ENCODE measurements at regions of chr5 and their contacts with region 1.

Region 1: DNA sequence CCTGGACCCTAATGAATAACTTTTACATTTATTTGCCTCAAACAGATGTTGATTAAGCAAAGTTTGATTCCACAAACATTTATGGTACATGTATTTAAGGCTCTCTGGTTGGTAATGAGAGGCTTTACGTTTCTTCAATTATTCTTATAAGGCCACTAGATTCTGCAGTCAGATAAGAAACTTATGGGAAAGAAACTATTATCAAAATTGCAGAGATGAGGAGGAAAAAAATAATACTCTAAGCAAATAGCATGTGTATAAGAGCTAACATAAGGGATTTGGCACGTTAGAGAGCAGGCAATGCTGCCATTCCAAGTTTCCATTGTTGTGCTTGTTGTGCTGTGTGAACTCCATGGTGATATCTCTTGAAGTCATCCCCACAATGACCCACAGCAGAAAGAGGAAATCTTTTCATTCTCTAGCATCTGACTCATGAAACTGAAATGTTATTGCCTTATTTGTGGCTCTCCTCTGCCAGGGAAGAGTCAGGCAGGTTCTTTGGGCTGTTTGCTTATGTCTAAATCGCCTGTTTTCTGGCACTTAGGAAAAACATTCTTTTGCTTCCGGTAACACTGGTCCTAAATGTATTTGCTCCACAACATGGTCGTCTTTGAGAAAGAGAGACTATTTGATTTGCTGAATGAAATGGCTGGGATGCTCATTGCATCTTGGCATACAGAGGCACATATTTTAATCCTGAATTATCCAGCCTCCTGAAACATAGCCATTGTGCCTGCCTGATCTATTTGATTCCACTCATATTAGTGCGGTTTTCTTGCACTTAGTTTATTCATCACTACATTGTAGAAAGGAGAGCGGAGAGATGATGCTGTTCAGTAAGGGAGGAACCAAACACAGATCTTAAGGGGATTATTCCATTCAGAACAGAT is 188.7 kb downstream of the CSNK1G3 start:
- DNase-seq: no peak
- ATAC-seq: peak; percentile 38

Region 2: DNA sequence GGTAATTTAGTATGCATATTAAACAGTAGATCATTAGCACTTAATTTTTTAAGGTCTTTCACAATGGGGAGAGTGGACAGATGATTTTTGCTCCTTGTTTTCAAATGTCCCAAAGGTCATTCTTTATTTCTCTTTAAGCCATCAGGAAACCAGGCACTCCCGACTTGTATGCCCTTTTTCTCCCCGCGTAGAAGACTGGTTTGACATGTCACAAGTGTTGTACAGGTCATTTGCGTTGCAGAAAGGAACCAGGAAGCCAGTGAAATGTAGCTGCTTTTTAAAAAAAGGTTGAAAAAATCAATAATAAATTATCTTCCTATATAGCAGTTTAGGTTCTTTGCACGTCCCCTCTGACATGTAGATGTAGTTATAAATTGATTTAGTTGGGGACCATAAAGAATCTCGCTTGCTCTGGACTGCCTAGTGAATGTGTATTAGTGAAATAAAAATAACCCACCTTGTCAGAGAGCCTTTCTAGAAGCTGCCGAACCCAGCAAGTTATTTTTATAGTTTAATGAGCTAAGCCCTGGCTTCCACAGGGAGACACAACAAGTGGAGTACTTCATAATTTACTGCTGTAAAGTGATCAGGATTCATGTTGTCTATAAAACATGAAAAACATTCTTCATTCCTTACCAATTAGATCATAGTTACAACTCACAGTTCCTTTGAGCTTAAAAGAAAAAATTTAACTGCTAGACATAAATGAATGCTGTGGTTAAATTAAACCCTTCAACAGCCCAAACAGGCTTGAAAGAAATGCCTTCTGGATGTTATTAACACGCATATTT is 215.9 kb after region 1 on chr5:
- intact Hi-C with region 1: loop called (anchors 5 kb)
- DNase-seq: no peak
- ATAC-seq: peak; percentile 59

Region 3: DNA sequence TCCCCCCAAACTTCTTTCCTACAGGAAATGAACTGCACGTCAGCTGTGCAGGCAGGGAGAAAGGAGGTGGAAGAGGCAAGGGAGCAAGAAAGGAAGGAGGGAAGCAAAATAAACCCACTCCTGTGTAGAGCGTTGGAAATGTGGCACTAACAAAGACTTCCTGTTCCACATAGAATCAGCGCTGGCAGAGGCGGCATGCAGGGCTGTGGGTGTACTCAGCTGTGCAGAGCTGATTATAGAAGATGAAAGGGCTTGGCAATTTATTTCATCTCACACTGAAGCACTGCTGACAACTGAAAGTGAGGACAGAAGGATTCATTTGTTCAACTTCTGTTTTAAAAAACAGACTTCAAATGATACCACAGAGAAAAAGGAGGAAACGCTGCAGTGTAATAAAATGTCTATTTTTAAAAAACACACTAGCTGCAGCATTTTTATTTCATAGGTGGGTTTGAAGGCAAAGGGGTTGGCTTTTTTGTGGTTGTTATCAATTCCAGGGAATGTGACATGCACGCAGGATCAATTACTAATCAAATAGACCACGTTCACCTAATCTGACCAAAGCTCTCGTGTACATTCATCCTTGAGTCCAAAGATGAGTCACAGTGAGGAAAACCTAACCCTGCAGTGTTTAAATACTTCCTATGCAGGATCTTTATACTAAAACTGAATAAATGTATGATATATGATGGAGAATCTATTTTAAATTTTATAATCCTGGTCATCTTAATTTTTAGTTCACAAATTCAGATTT is 462.3 kb after region 1 on chr5:
- intact Hi-C with region 1: loop called (anchors 10 kb)
- DNase-seq: no peak
- ATAC-seq: peak; percentile 81